MCF 10A (cell line): ENCODE measurements at regions of chr17 and their contacts with region 1.

Region 1: GRCh38 chr17:35242805-35243560 is at the start of gene SLFN5:
- DNase-seq: peak; percentile 93
- H3K4me3 Mint-ChIP-seq: peak within 1 kb of the TSS; percentile 98
- H3K27ac Mint-ChIP-seq: peak within 1 kb of the TSS; percentile 96
- H3K4me1 Mint-ChIP-seq: peaks cover 52% of the 10 kb centered on the region
- H3K27me3 Mint-ChIP-seq: no peaks in the 10 kb centered on the region
- CTCF ChIP-seq: no peak
- total RNA-seq, gene SLFN5: 133 and 205 TPM in 2 replicates

Region 2: DNA sequence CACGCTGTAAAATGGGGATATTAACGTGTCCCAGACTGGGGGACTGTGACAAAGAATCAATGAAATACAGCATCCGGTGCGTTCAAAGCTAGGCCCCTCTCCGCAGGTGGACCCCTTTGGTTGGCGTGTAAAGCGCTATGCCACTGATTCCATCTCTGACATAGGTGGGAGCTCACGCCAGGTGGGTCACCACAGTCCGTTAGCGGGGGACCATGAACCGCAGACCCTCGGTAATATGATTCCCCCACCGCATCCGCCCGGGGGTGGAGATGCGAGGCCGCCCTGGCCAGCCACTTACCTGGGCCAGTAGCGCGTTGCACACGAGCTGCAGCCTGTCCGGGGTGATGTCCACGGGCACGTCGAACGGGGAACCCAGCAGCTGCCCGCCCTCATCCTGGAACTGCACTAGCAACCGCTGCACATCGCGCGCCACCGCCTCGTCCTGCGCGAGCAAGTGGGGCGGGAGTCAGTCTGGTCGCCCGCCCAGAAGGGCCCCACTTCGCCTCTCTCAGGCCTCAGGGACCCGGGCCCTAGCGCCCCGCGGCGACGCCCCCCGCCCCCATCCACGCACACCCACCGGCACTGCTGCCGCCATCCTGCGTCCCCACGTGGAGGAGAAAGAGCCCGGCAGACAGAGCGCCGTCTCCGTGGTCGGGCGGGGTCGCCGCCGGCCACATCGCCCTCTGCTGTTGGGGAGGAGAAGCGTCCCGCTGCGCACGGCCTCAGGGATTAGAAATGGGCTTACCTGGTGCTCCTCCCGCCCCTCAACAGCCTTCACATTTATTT is 101.1 kb before region 1 on chr17 and contains the start of gene NLE1:
- CTCF ChIA-PET with region 1: no interaction called
- POLR2A ChIA-PET with region 1: interaction called, 11 read pairs
- intact Hi-C with region 1: loop called (anchors 1 kb)
- DNase-seq: peak; percentile 73
- H3K4me3 Mint-ChIP-seq: peak within 1 kb of the TSS; percentile 73
- H3K27ac Mint-ChIP-seq: no peak within 1 kb of the TSS
- H3K4me1 Mint-ChIP-seq: peaks cover 4% of the 10 kb centered on the region
- H3K27me3 Mint-ChIP-seq: no peaks in the 10 kb centered on the region
- CTCF ChIP-seq: peak; percentile 96
- total RNA-seq, gene NLE1: 24.3 and 36.2 TPM in 2 replicates

Region 3: DNA sequence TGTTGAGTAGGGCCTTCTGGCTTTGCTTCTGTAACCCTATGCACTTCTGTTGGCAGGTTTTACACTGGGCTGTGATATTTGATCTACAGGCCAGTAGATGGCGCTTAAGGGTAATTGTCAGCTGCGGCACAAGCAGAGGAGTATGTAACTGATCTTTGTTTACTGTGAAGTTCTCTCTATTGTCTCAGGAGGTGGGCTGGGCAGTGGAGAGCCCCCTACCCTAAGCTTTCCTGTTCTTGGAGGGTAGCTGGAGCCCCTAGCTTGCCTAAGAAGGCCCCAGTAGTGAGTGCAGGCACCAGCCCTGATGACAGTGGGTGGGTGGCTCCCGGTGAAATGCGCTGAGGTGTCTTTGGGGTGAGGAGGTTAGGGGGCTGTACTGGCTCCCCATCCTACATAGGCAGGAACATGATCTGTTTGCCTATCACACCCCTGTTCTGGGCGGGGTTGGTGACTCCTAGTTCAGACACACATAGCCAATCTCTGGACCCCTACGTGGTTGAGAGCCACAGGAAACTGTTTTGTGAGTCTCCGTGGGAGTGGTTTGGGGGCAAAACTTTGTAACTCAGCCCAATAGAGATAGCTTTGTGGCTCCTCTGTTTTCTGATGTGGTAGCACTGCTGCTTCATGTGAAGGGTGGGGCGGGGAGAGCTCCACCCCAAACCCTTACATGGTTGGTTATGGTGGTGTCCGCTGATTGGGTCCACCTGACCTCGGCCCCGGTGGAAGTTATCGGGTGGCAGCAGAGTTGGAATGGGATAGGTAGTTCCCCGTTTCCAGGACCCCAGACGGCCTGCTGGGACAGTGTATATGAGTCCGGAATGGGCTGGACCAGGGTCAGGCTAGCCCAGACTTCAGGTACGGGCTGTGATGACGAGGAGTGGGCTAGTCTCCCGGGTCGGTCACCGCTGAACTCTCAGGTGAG is 70.1 kb after region 1 on chr17:
- CTCF ChIA-PET with region 1: interaction called, 12 read pairs
- POLR2A ChIA-PET with region 1: interaction called, 6 read pairs
- intact Hi-C with region 1: loop called (anchors 10 kb)
- DNase-seq: peak; percentile 77
- H3K4me3 Mint-ChIP-seq: no peak overlapping the region
- H3K27ac Mint-ChIP-seq: no peak overlapping the region
- H3K4me1 Mint-ChIP-seq: peaks cover 14% of the 10 kb centered on the region
- H3K27me3 Mint-ChIP-seq: peaks cover 81% of the 10 kb centered on the region
- CTCF ChIP-seq: peak; percentile 77

Region 4: GRCh38 chr17:35416659-35417058 is 173.7 kb after region 1 on chr17:
- CTCF ChIA-PET with region 1: no interaction called
- POLR2A ChIA-PET with region 1: no interaction called
- intact Hi-C with region 1: no loop called
- DNase-seq: no peak
- H3K4me3 Mint-ChIP-seq: no peak overlapping the region
- H3K27ac Mint-ChIP-seq: no peak overlapping the region
- H3K4me1 Mint-ChIP-seq: no peaks in the 10 kb centered on the region
- H3K27me3 Mint-ChIP-seq: no peaks in the 10 kb centered on the region
- CTCF ChIP-seq: no peak

Region 5: DNA sequence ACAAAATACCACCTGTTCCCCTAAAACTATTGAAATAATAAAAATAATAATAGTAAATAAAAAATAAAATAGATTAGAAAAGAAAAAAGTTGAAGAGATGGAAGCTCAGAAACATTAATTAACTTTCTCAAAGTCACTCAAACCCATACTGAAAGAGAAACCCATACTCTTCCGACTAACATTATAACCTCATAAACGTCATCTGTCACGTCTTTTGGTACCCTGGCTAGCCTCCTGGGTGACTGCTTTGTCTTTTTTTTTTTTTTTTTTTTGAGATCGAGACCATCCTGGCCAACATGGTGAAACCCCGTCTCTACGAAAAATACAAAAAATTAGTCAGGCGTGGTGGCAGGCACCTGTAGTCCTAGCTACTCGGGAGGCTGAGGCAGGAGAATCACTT is 286.9 kb after region 1 on chr17:
- CTCF ChIA-PET with region 1: interaction called, 4 read pairs
- POLR2A ChIA-PET with region 1: interaction called, 5 read pairs
- intact Hi-C with region 1: loop called (anchors 5 kb)
- DNase-seq: no peak
- H3K4me3 Mint-ChIP-seq: no peak overlapping the region
- H3K27ac Mint-ChIP-seq: no peak overlapping the region
- H3K4me1 Mint-ChIP-seq: peaks cover 6% of the 10 kb centered on the region
- H3K27me3 Mint-ChIP-seq: peaks cover 52% of the 10 kb centered on the region
- CTCF ChIP-seq: no peak

Region 6: DNA sequence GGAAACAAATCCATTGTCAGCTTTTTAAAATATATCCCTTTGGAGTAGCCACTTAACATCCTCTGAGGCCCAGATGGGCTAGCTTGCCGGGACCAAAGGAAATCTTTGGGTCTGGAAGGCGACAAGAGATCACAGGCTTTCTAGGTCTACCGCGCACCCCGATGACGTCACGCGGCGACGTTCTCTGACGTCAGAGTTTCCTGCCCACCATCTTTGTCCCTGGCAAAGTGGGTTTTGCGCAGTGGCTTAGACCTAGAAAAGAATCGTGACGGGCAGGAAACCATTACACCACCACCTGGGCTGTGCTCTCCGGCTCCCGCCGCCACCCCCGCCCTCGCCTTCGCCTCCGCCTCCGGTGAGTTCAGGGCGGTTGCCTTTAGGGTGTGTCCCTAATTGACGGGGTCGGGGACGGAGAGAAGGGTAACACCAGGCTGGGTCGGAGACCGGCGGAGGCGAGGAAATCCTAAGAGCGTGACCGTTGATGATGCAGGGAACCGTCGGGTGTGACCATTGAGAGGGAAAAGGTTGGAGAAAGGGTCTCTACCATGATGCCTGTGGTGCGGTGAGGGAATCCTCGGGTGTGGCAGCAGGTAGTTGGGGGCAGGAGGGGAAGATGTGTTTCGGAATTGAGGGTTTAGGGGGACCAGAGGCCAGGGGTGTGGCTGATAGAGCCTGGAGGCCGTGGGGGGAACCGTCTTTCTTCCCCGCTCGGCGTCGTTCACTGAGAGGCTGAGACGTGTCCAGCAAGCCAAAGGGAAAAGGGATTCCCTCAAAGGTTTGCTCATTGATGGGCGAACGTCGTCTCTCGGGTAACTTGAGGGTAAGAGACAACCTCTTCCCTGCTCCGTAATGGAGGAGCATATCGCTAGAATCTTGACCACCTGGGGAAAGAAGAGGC is 344.3 kb after region 1 on chr17 and contains the start of gene AP2B1:
- CTCF ChIA-PET with region 1: no interaction called
- POLR2A ChIA-PET with region 1: interaction called, 25 read pairs
- intact Hi-C with region 1: no loop called
- DNase-seq: peak; percentile 95
- H3K4me3 Mint-ChIP-seq: peak within 1 kb of the TSS; percentile 97
- H3K27ac Mint-ChIP-seq: peak within 1 kb of the TSS; percentile 99
- H3K4me1 Mint-ChIP-seq: peaks cover 18% of the 10 kb centered on the region
- H3K27me3 Mint-ChIP-seq: no peaks in the 10 kb centered on the region
- CTCF ChIP-seq: no peak
- total RNA-seq, gene AP2B1: 227 and 229 TPM in 2 replicates